MCF 10A (cell line): ENCODE measurements at regions of chr9 and their contacts with region 1.

Region 1: DNA sequence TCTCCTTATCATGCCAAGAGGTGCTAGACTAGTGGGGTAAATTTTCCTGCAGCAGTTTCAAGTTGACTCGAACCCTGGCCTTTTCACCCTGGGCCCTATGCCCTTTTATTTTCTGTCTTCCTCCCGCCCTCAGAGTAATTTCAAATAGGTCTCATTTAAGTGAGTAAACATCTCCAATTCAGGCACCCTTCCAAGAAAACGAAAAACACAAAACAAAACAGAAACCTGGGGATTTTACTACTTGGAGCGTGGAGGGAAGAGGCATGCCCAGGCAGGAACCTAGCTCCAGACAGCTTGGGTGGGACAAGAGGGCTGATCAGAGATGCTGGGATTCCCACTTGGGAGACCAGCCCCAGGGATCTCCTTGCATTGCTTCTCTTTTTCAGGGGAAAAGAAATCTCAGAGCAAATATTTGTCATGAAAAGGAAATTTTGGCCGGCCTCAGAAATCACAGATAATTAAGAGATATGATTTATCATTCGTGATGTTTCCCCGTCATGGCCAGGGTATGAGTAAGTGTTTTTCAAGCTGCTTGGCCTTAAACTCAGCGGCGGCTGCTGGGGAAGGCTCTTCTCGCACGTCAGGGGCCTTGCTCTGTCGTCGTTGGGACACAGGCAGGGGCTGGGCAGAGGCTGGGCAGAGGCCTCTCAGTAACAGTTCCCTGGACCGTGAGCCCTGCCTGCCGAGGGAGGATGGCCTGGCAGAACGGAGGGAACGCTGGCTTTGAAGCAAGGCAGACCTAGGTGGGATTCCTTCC is 248.6 kb upstream of the KLF4 start:
- DNase-seq: peak; percentile 95
- H3K4me3 Mint-ChIP-seq: peak overlapping the region; percentile 38
- H3K27ac Mint-ChIP-seq: peak overlapping the region; percentile 99
- H3K4me1 Mint-ChIP-seq: peaks cover 74% of the 10 kb centered on the region
- H3K27me3 Mint-ChIP-seq: no peaks in the 10 kb centered on the region
- CTCF ChIP-seq: no peak

Region 2: GRCh38 chr9:107711540-107711939 is 26.6 kb before region 1 on chr9:
- CTCF ChIA-PET with region 1: interaction called, 12 read pairs
- POLR2A ChIA-PET with region 1: interaction called, 34 read pairs
- intact Hi-C with region 1: loop called (anchors 2 kb)
- DNase-seq: peak; percentile 98
- H3K4me3 Mint-ChIP-seq: no peak overlapping the region
- H3K27ac Mint-ChIP-seq: peak overlapping the region; percentile 86
- H3K4me1 Mint-ChIP-seq: peaks cover 43% of the 10 kb centered on the region
- H3K27me3 Mint-ChIP-seq: no peaks in the 10 kb centered on the region
- CTCF ChIP-seq: no peak

Region 3: GRCh38 chr9:107726077-107726476 is 12.1 kb before region 1 on chr9:
- CTCF ChIA-PET with region 1: no interaction called
- POLR2A ChIA-PET with region 1: no interaction called
- intact Hi-C with region 1: no loop called
- DNase-seq: no peak
- H3K4me3 Mint-ChIP-seq: no peak overlapping the region
- H3K27ac Mint-ChIP-seq: no peak overlapping the region
- H3K4me1 Mint-ChIP-seq: peaks cover 17% of the 10 kb centered on the region
- H3K27me3 Mint-ChIP-seq: no peaks in the 10 kb centered on the region
- CTCF ChIP-seq: no peak

Region 4: GRCh38 chr9:107970726-107971125 is 232.6 kb after region 1 on chr9:
- CTCF ChIA-PET with region 1: no interaction called
- POLR2A ChIA-PET with region 1: no interaction called
- intact Hi-C with region 1: no loop called
- DNase-seq: no peak
- H3K4me3 Mint-ChIP-seq: no peak overlapping the region
- H3K27ac Mint-ChIP-seq: no peak overlapping the region
- H3K4me1 Mint-ChIP-seq: peaks cover 4% of the 10 kb centered on the region
- H3K27me3 Mint-ChIP-seq: no peaks in the 10 kb centered on the region
- CTCF ChIP-seq: no peak

Region 5: GRCh38 chr9:108041551-108041950 is 303.4 kb after region 1 on chr9:
- CTCF ChIA-PET with region 1: interaction called, 8 read pairs
- POLR2A ChIA-PET with region 1: interaction called, 19 read pairs
- intact Hi-C with region 1: loop called (anchors 2 kb)
- DNase-seq: peak; percentile 89
- H3K4me3 Mint-ChIP-seq: peak overlapping the region; percentile 54
- H3K27ac Mint-ChIP-seq: peak overlapping the region; percentile 89
- H3K4me1 Mint-ChIP-seq: peaks cover 50% of the 10 kb centered on the region
- H3K27me3 Mint-ChIP-seq: no peaks in the 10 kb centered on the region
- CTCF ChIP-seq: no peak

Region 6: GRCh38 chr9:108272349-108272899 is 534.3 kb after region 1 on chr9:
- CTCF ChIA-PET with region 1: interaction called, 3 read pairs
- POLR2A ChIA-PET with region 1: interaction called, 3 read pairs
- intact Hi-C with region 1: loop called (anchors 5 kb)
- DNase-seq: peak; percentile 73
- H3K4me3 Mint-ChIP-seq: peak overlapping the region; percentile 52
- H3K27ac Mint-ChIP-seq: peak overlapping the region; percentile 93
- H3K4me1 Mint-ChIP-seq: peaks cover 30% of the 10 kb centered on the region
- H3K27me3 Mint-ChIP-seq: no peaks in the 10 kb centered on the region
- CTCF ChIP-seq: peak; percentile 79

Region 7: GRCh38 chr9:108551030-108551838 is 813.1 kb after region 1 on chr9:
- CTCF ChIA-PET with region 1: no interaction called
- POLR2A ChIA-PET with region 1: interaction called, 11 read pairs
- intact Hi-C with region 1: no loop called
- DNase-seq: peak; percentile 97
- H3K4me3 Mint-ChIP-seq: peak overlapping the region; percentile 53
- H3K27ac Mint-ChIP-seq: peak overlapping the region; percentile 91
- H3K4me1 Mint-ChIP-seq: peaks cover 37% of the 10 kb centered on the region
- H3K27me3 Mint-ChIP-seq: no peaks in the 10 kb centered on the region
- CTCF ChIP-seq: no peak